ENCODE measurements at regions of chr1 and their contacts with region 1.

Region 1: DNA sequence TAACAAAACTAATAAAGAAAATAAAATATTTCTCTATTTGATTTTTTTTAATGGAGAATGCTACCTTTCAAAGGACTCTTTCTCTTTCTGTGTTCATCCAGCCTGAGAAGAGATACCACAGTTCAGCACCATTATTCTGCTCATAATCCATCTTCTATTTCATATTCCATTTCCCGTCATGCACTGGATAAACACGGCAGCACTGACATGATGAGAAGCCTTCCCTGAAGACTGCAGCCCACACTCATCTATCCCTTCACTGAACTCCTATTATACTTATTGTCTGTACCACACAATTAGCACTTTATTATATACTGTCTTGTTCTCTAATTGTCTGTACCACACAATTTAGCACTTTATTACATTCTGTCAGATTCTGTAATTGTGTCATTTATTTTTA is 10.7 kb upstream of the NPL start:
- DNase-seq: no peak
- ATAC-seq: no peak
- H3K4me3 ChIP-seq: no peak overlapping the region
- H3K4me1 ChIP-seq: no peaks in the 10 kb centered on the region
- CTCF ChIP-seq: no peak

Region 2: GRCh38 chr1:182601416-182601786 is 177.5 kb before region 1 on chr1:
- intact Hi-C with region 1: no loop called
- DNase-seq: peak in 1 of 3 donors; percentile 67
- ATAC-seq: peak; percentile 50
- H3K4me3 ChIP-seq: no peak overlapping the region
- H3K4me1 ChIP-seq: peaks cover 10% of the 10 kb centered on the region
- CTCF ChIP-seq: peak; percentile 62

Region 3: DNA sequence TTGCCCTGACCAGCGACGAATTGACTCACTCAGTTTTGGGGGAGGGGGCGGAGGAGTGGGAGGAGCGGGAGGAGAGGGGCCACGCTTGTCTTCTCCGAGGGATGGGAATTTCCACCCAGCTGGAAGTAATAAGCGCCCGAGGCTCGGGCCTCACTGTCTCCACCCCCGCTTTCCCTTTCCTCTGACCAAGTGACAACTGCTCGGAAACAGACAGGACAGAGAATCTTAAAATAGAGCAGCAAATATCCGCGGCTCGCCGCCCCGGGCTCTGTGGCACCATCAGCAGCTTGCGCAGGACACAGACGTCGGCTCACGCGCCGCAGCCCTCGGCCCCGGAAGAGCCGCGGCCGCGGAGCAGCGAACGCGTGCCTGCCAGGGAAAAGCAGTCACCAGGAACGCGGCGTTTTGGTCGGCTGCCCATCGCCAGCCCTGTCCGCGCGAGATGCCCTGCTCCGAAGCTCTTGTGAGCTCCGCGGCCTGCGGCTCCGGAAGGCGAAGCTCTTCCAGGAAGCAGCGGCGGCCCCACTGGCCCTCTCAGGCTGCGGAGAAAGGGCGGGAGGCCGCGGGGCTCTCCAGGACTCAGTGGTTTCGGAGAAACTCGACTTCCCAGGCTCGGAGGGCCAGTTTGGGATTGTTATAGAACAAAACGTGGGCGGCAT is 163.9 kb before region 1 on chr1:
- intact Hi-C with region 1: loop called in 1 of 2 experiments (anchors 5 kb)
- DNase-seq: peak; percentile 62 to 82 (median 75)
- ATAC-seq: peak; percentile 69
- H3K4me3 ChIP-seq: no peak overlapping the region
- H3K4me1 ChIP-seq: peaks cover 23% of the 10 kb centered on the region
- CTCF ChIP-seq: no peak

Region 4: GRCh38 chr1:182869241-182869666 is 90.4 kb after region 1 on chr1:
- intact Hi-C with region 1: no loop called
- DNase-seq: no peak
- ATAC-seq: peak; percentile 19
- H3K4me3 ChIP-seq: no peak overlapping the region
- H3K4me1 ChIP-seq: no peaks in the 10 kb centered on the region
- CTCF ChIP-seq: no peak